ENCODE measurements at regions of chr6 and their contacts with region 1.

Region 1: GRCh38 chr6:16332175-16332542 is 93.8 kb downstream of the GMPR start:
- DNase-seq: peak; percentile 78
- ATAC-seq: peak; percentile 57
- H3K4me3 ChIP-seq: no peak overlapping the region
- H3K27ac ChIP-seq: peak overlapping the region; percentile 18; the same call in 1 of the 2 replicates
- H3K4me1 ChIP-seq: peaks cover 16% of the 10 kb centered on the region
- H3K27me3 ChIP-seq: no peaks in the 10 kb centered on the region
- CTCF ChIP-seq: peak; percentile 94
- POLR2A ChIP-seq: no peak
- RAD21 ChIP-seq: peak; percentile 93

Region 2: DNA sequence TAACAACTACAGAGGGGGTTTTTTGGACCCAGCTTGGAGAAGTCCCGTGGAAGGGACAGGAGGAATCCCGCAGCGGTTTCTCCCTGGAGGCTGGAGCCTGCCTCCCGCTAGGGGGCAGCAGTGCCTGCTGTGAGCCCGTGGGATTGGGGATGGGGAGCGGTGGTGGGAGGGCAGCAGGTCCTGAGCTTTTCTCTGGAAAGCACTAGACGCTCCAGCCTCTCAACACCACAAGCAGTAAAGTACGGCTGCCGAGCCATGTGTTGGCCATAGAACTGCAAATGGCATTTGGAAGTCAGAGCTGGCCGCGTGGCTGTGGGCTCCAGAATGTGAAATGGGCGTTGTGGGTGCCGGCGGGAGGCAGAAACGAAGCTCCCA is 46.0 kb before region 1 on chr6:
- CTCF ChIA-PET with region 1: interaction called, 4 read pairs
- POLR2A ChIA-PET with region 1: no interaction called
- dilution Hi-C with region 1: no loop called
- in situ Hi-C with region 1: no loop called
- intact Hi-C with region 1: loop called (anchors 1 kb)
- DNase-seq: peak; percentile 38
- ATAC-seq: peak; percentile 86
- H3K4me3 ChIP-seq: no peak overlapping the region
- H3K27ac ChIP-seq: no peak overlapping the region
- H3K4me1 ChIP-seq: no peaks in the 10 kb centered on the region
- H3K27me3 ChIP-seq: no peaks in the 10 kb centered on the region
- CTCF ChIP-seq: peak; percentile 80
- POLR2A ChIP-seq: no peak
- RAD21 ChIP-seq: peak; percentile 81

Region 3: DNA sequence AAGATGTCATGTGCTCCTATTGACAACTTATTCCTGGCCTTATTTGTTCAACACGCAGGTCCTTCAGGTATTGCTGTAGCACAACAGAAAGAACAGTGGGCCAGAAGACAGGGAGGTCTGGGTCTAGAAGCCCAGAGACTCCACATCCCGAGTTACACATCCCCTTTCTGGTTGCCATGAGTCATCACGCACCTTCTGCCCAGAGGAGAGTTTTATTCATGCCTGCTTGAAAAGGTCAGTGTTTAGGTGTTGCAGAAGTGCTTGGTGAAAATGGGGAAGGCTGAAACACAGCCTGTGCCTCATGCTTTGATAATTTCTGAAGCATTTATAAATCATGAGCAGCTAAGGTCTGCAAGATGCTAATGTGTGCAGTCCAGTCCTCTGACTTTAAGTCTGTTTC is 162.6 kb after region 1 on chr6:
- CTCF ChIA-PET with region 1: no interaction called
- POLR2A ChIA-PET with region 1: no interaction called
- dilution Hi-C with region 1: no loop called
- in situ Hi-C with region 1: no loop called
- intact Hi-C with region 1: loop called (anchors 5 kb)
- DNase-seq: peak; percentile 31
- ATAC-seq: no peak
- H3K4me3 ChIP-seq: no peak overlapping the region
- H3K27ac ChIP-seq: no peak overlapping the region
- H3K4me1 ChIP-seq: peaks cover 8% of the 10 kb centered on the region
- H3K27me3 ChIP-seq: no peaks in the 10 kb centered on the region
- CTCF ChIP-seq: no peak
- POLR2A ChIP-seq: no peak
- RAD21 ChIP-seq: no peak

Region 4: GRCh38 chr6:16576451-16577368 is 244.6 kb after region 1 on chr6:
- CTCF ChIA-PET with region 1: no interaction called
- POLR2A ChIA-PET with region 1: no interaction called
- dilution Hi-C with region 1: no loop called
- in situ Hi-C with region 1: no loop called
- intact Hi-C with region 1: loop called (anchors 5 kb)
- DNase-seq: no peak
- ATAC-seq: no peak
- H3K4me3 ChIP-seq: no peak overlapping the region
- H3K27ac ChIP-seq: no peak overlapping the region
- H3K4me1 ChIP-seq: peaks cover 4% of the 10 kb centered on the region
- H3K27me3 ChIP-seq: no peaks in the 10 kb centered on the region
- CTCF ChIP-seq: no peak
- POLR2A ChIP-seq: no peak
- RAD21 ChIP-seq: no peak

Region 5: GRCh38 chr6:17086469-17086868 is 754.3 kb after region 1 on chr6:
- CTCF ChIA-PET with region 1: no interaction called
- POLR2A ChIA-PET with region 1: no interaction called
- dilution Hi-C with region 1: no loop called
- in situ Hi-C with region 1: loop called (anchors 5 kb)
- intact Hi-C with region 1: loop called (anchors 2 kb)
- DNase-seq: peak; percentile 83
- ATAC-seq: peak; percentile 86
- H3K4me3 ChIP-seq: no peak overlapping the region
- H3K27ac ChIP-seq: no peak overlapping the region
- H3K4me1 ChIP-seq: 0 out of 2 replicates have a peak, but pooled peaks cover 1% of the 10 kb centered on the region
- H3K27me3 ChIP-seq: no peaks in the 10 kb centered on the region; the same call in 1 of the 2 replicates
- CTCF ChIP-seq: peak; percentile 82
- POLR2A ChIP-seq: no peak
- RAD21 ChIP-seq: peak; percentile 90

Measured in IMR-90 (cell line).